H1 (cell line): ENCODE measurements at regions of chr6 and their contacts with region 1.

Region 1: DNA sequence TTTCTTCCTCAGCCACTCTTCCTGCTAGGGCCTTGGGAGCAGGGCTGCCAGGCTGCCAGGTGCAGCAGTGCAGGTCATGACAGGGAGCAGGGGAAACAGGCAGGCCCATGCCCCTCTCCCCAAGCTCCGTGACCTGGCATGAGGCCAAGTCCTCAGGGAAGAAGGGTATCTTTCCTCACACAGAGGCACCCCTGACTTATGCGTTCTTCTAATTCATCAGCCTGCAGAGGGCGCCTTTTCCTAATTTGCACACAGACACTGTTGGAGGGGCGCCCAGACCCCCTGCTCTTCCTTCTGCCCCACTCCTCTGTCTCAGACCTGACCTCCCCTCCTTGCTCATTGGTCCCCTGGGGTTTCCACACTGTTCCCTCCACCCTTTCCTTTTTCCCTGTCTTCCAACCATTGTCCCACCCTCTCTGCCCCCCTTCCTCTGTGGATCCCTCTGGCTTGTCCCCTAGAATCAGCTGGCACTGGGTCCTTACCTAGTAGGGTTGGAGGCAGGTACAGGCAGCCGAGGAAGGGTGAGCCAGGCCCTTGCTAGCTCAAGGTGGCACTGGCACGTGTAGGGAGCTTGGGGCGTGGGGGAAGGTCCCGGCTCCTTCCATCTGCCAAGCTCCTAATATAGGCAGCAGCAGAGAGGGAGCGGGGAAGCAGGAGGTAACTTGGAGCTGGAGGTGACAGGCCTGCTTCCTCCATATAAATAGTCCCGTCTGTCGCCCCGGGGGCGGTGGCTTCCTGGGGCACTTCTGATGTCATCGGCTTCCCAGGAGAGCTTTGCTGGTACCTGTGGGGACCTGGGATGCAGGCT is 154.9 kb upstream of the MLN start:
- DNase-seq: peak in 1 of 2 experiments; percentile 82
- H3K4me3 ChIP-seq: no peak overlapping the region
- H3K27ac ChIP-seq: no peak overlapping the region
- H3K4me1 ChIP-seq: peaks cover 8 to 12% (median 10%) of the 10 kb centered on the region in 4 experiments
- H3K27me3 ChIP-seq: no peaks in the 10 kb centered on the region; a peak in 1 of 7 replicates
- CTCF ChIP-seq: peak in 2 of 3 experiments; percentile 70 to 79; a peak in 3 of 4 replicates
- EP300 ChIP-seq: no peak
- POLR2A ChIP-seq: no peak
- RAD21 ChIP-seq: peak; percentile 56 to 72

Region 2: DNA sequence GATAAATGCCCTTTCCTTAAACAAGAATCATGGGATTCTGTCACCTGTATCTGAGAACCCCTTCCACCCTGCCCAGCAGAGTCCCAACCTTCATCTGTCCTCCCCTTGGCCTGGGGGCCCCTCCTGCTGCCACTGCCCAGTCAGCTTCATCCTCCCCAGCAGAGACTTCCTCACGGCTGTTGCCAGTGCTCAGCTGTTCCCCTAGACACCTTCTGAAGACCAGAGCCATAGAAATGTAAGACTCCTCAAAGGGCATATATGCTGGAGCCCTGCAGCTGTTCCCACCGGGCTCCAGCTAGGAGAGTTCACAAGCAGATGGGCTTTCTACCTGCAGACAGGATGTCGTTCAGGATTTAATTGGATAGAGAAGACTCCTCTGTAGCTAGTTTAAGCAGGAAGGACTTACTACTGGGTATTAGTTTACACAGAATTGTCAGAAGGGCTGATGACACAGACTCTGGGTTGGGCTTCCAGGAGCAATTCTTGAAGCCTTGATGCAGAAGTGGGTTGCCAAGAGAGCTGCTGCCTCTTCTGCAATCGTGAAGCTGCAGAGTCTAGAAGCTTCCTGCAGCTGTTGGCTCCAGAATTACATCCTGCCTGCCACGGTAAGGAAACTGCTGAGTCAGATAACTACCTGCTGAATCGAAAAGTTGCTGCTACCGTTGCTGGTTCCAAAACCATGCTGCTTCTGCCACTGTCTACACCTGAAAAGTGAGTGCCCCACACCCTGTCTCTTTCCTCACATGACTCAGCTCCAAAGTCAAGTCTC is 97.8 kb before region 1 on chr6:
- CTCF ChIA-PET with region 1: interaction called, 46 read pairs
- POLR2A ChIA-PET with region 1: no interaction called
- DNase-seq: no peak
- H3K4me3 ChIP-seq: no peak overlapping the region
- H3K27ac ChIP-seq: no peak overlapping the region
- H3K4me1 ChIP-seq: no peaks in the 10 kb centered on the region; a peak in 1 of 7 replicates
- H3K27me3 ChIP-seq: 0 out of 7 replicates have a peak, but pooled peaks cover 0 to 1% (median 0%) of the 10 kb centered on the region in 4 experiments
- CTCF ChIP-seq: no peak
- EP300 ChIP-seq: no peak
- POLR2A ChIP-seq: no peak
- RAD21 ChIP-seq: no peak

Region 3: GRCh38 chr6:34015586-34015985 is 56.9 kb after region 1 on chr6:
- CTCF ChIA-PET with region 1: interaction called, 234 read pairs
- POLR2A ChIA-PET with region 1: no interaction called
- DNase-seq: no peak
- H3K4me3 ChIP-seq: no peak overlapping the region
- H3K27ac ChIP-seq: no peak overlapping the region
- H3K4me1 ChIP-seq: peaks cover 0 to 2% (median under 1%) of the 10 kb centered on the region in 4 experiments; a peak in 3 of 7 replicates
- H3K27me3 ChIP-seq: peaks cover 5 to 41% (median 35%) of the 10 kb centered on the region in 4 experiments
- CTCF ChIP-seq: no peak
- EP300 ChIP-seq: no peak
- POLR2A ChIP-seq: no peak
- RAD21 ChIP-seq: no peak

Region 4: GRCh38 chr6:34044945-34045595 is 86.3 kb after region 1 on chr6:
- CTCF ChIA-PET with region 1: interaction called, 13 read pairs
- POLR2A ChIA-PET with region 1: no interaction called
- DNase-seq: no peak
- H3K4me3 ChIP-seq: no peak overlapping the region
- H3K27ac ChIP-seq: no peak overlapping the region
- H3K4me1 ChIP-seq: peaks cover 0 to 13% (median 8%) of the 10 kb centered on the region in 4 experiments; a peak in 6 of 7 replicates
- H3K27me3 ChIP-seq: no peaks in the 10 kb centered on the region
- CTCF ChIP-seq: no peak
- EP300 ChIP-seq: no peak
- POLR2A ChIP-seq: no peak
- RAD21 ChIP-seq: no peak

Region 5: GRCh38 chr6:34161857-34162515 is 203.3 kb after region 1 on chr6:
- CTCF ChIA-PET with region 1: interaction called, 10 read pairs
- POLR2A ChIA-PET with region 1: no interaction called
- DNase-seq: peak in 1 of 2 experiments; percentile 32
- H3K4me3 ChIP-seq: no peak overlapping the region
- H3K27ac ChIP-seq: no peak overlapping the region
- H3K4me1 ChIP-seq: no peaks in the 10 kb centered on the region
- H3K27me3 ChIP-seq: no peaks in the 10 kb centered on the region
- CTCF ChIP-seq: no peak
- EP300 ChIP-seq: no peak
- POLR2A ChIP-seq: no peak
- RAD21 ChIP-seq: no peak